K562 (cell line): ENCODE measurements at regions of chr12 and their contacts with region 1.

Region 1: DNA sequence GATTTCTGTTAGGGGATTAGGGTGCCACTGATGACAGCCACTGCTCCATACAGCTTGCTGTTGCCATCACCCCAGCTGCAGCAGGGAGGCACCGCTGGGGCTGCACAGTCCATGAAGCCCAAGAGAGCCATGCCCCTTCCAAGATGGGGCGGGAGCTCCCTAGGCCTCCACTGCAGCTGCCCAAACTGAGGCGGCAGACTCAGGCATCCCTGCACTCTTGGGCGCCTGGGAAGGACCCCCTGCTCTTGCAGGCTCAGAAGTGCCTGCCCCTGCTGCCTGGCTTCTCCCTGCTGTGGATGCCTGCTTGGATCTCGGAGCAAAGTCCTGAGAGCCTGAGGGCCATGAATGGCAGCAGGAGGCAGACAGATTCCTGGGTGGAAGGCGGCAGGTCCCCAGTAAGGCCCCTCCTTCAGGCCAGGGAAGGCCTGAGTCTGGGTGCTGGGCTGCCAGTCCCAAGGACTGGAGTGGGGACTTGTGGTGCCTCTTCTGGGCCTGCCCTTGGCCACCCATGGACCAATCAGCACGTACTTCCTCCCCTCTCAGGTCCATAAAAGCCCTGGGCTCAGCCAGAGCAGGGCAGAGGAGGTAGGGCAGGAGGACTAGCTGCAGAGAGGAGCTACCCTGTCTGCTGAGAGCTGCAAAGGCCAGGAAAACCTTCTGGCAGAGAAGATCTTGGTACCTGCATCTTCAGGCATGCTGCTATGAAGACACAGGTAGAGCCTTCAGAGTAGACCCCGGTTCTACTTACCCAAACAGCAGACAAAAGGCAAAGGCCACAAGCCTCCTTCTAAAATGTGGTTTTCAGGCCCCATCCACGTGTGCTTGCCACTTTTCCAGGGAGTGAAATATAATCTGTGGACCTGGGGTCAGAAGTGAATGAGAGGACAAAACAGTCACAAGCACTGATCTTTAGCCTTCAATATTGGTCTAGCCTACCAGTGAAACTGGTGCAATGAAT is 30.0 kb upstream of the STK38L start:
- DNase-seq: no peak
- ATAC-seq: no peak; the same call in 2 of the 3 replicates
- H3K4me3 ChIP-seq: no peak overlapping the region
- H3K27ac ChIP-seq: no peak overlapping the region
- H3K4me1 ChIP-seq: no peaks in the 10 kb centered on the region
- H3K27me3 ChIP-seq: peaks cover 4 to 5% of the 10 kb centered on the region in 2 experiments; a peak in 2 of 5 replicates
- CTCF ChIP-seq: no peak
- EP300 ChIP-seq: no peak
- POLR2A ChIP-seq: no peak
- RAD21 ChIP-seq: no peak

Region 2: GRCh38 chr12:27277846-27278260 is 63.7 kb after region 1 on chr12:
- CTCF ChIA-PET with region 1: no interaction called
- POLR2A ChIA-PET with region 1: no interaction called
- in situ Hi-C with region 1: no loop called
- intact Hi-C with region 1: loop called (anchors 5 kb)
- DNase-seq: no peak
- ATAC-seq: no peak
- H3K4me3 ChIP-seq: no peak overlapping the region
- H3K27ac ChIP-seq: no peak overlapping the region
- H3K4me1 ChIP-seq: no peaks in the 10 kb centered on the region
- H3K27me3 ChIP-seq: no peaks in the 10 kb centered on the region; a peak in 3 of 5 replicates
- CTCF ChIP-seq: no peak
- EP300 ChIP-seq: no peak
- POLR2A ChIP-seq: no peak
- RAD21 ChIP-seq: no peak

Region 3: DNA sequence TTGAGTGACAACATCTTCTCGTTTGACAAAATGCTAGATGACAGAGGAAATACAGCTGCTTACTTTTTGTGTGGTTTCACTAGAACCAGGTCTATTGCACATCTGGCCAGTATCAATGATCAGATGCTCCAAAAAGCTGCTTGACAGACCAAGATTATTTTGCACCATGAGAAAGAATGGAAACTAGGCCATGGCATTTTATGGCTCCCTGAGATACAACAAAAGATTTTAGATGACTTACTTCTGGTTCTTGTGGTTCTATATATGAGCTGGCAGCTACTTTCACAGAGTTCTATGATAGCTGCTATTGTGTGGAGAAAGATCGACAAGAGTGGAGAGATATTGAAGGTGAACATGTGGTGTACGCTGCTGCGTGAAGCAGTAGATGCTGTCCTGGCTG is 284.0 kb after region 1 on chr12:
- CTCF ChIA-PET with region 1: no interaction called
- POLR2A ChIA-PET with region 1: no interaction called
- in situ Hi-C with region 1: no loop called
- intact Hi-C with region 1: no loop called
- DNase-seq: no peak
- ATAC-seq: no peak
- H3K4me3 ChIP-seq: no peak overlapping the region
- H3K27ac ChIP-seq: no peak overlapping the region
- H3K4me1 ChIP-seq: no peaks in the 10 kb centered on the region
- H3K27me3 ChIP-seq: peaks cover 0 to 2% of the 10 kb centered on the region in 2 experiments; a peak in 1 of 5 replicates
- CTCF ChIP-seq: no peak
- EP300 ChIP-seq: no peak
- POLR2A ChIP-seq: no peak
- RAD21 ChIP-seq: no peak